Activated naive CD4-positive, alpha-beta T cell treated with anti-CD3 and anti-CD28 coated beads for 36 hours (primary cell): ENCODE measurements at regions of chr4 and their contacts with region 1.

Region 1: DNA sequence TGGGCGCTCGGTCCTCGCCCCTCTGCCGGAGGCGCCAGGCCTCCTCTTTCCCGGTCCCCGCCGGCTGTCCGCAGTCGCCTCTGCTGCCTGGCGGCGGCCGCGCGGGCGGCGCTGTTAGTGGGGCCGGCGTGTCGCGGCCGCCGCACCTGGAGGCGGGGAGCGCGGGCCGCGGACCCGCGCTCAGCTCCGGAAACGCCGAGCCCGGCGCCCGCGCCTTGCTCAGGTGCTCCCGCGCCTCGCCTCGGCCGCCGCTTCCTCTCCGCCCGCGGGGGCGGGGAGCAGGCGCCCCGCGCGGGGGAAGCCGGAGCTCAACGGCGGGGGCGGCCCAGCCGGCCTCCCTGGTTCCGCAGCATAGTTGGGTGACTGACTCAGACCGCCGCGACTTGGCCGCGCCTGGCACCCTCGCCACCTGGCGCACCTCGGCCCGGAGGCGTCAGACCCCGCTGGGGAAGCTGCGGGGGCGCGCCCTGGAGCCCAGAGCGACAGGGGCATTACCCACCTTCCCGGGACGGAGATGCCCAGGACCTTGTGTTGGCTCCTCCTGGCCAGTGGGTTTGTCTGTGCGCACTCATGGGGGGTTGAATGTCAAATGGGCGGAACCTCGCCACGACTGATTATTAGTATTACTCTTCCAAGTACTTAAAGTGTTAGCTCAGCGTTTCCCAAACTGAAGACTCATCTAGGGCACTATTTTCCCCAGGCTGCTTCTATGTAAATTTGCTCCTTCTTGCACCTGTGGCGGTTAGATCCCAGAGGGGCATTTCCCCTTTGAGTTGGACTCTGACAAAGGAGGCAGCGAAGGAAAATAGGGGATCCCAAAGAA is at the start of gene ARAP2:
- DNase-seq: peak; percentile 77
- H3K4me3 Mint-ChIP-seq: peak within 1 kb of the TSS; percentile 94
- H3K27ac Mint-ChIP-seq: peak within 1 kb of the TSS; percentile 88
- H3K4me1 Mint-ChIP-seq: peaks cover 24% of the 10 kb centered on the region
- H3K27me3 Mint-ChIP-seq: no peaks in the 10 kb centered on the region
- total RNA-seq, gene ARAP2: 29.6 to 38.2 TPM

Region 2: GRCh38 chr4:35818520-35818919 is 425.9 kb before region 1 on chr4:
- CTCF ChIA-PET with region 1: no interaction called
- intact Hi-C with region 1: no loop called
- DNase-seq: no peak
- H3K4me3 Mint-ChIP-seq: no peak overlapping the region
- H3K27ac Mint-ChIP-seq: no peak overlapping the region
- H3K4me1 Mint-ChIP-seq: no peaks in the 10 kb centered on the region
- H3K27me3 Mint-ChIP-seq: no peaks in the 10 kb centered on the region

Region 3: GRCh38 chr4:35952751-35953150 is 291.7 kb before region 1 on chr4:
- CTCF ChIA-PET with region 1: no interaction called
- intact Hi-C with region 1: no loop called
- DNase-seq: no peak
- H3K4me3 Mint-ChIP-seq: no peak overlapping the region
- H3K27ac Mint-ChIP-seq: no peak overlapping the region
- H3K4me1 Mint-ChIP-seq: no peaks in the 10 kb centered on the region
- H3K27me3 Mint-ChIP-seq: peaks cover 3% of the 10 kb centered on the region

Region 4: GRCh38 chr4:35970366-35970960 is 274.0 kb before region 1 on chr4:
- CTCF ChIA-PET with region 1: no interaction called
- intact Hi-C with region 1: loop called (anchors 5 kb)
- DNase-seq: no peak
- H3K4me3 Mint-ChIP-seq: no peak overlapping the region
- H3K27ac Mint-ChIP-seq: no peak overlapping the region
- H3K4me1 Mint-ChIP-seq: peaks cover 8% of the 10 kb centered on the region
- H3K27me3 Mint-ChIP-seq: no peaks in the 10 kb centered on the region

Region 5: DNA sequence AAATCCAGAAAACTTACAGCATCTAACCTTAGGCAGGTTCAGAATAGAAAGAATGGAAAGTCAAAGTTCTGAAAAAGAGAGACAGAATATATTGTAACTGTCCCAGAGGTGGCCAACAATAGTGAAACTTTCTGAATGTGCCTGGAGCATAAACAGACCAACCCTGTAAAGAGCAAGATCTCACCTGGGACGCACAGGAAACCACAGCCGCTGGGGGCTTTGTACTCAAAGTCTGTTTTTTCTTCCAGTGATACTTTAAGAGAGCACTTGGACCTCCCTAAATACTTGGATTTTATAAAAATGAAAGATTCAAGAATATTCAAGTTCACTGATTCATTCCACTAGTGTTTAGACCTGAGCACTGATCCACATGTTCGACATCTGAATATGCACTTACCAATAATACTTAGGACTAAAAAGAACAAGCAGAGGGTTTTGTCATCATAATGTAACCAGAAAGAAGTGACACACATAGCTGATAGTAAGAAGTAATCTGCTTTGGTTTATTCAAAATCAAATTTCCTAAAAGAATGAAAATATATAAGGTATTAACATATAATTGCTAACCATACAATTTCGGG is 35.5 kb before region 1 on chr4:
- CTCF ChIA-PET with region 1: interaction called, 3 read pairs
- intact Hi-C with region 1: loop called (anchors 1 kb)
- DNase-seq: peak; percentile 31
- H3K4me3 Mint-ChIP-seq: no peak overlapping the region
- H3K27ac Mint-ChIP-seq: peak overlapping the region; percentile 44
- H3K4me1 Mint-ChIP-seq: peaks cover 29% of the 10 kb centered on the region
- H3K27me3 Mint-ChIP-seq: no peaks in the 10 kb centered on the region